B cell (primary cell): ENCODE measurements at regions of chr2 and their contacts with region 1.

Region 1: DNA sequence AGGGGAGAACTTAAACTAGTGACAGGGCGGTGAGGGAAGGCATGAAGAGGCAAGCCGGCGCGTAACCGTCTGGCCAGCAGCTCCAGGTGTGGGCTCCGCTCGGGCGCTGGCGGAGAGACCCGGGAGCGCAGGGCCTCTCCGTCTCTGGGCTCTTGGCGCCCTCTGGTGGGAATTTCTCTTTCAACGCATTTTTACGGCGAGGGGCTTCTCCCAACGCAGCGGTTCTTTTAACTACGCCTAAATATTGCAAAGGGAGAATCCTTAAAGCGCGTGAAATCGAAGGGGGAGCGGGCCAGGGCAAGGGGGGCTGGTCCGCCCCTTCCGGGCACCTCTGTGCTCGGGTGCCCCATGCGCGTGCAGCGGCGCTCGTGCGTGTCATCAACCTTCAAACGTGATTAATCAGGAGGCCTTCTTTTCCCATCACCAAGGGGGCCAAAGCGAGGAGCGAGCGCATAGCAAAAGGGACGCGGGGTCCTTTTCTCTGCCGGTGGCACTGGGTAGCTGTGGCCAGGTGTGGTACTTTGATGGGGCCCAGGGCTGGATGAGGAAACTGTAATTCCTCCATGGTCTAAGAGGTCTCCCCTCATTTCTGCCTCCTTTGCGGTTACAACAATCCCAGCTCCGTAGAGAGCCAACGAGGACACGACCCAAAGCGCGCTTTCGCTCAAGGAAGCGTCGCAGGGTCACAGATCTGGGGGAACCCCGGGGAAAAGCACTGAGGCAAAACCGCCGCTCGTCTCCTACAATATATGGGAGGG is 762 bp upstream of the GAD1 start:
- DNase-seq: peak; percentile 76
- ATAC-seq: peak; percentile 40
- H3K4me3 ChIP-seq: peak overlapping the region; percentile 21 to 49 (median 45)
- H3K4me3 Mint-ChIP-seq: peak overlapping the region; percentile 63
- H3K27ac ChIP-seq: no peak overlapping the region
- H3K27ac Mint-ChIP-seq: no peak overlapping the region
- H3K4me1 ChIP-seq: peaks cover 53 to 66% of the 10 kb centered on the region in 2 donors
- H3K4me1 Mint-ChIP-seq: peaks cover 50% of the 10 kb centered on the region
- H3K27me3 ChIP-seq: peaks cover 0 to 81% (median 65%) of the 10 kb centered on the region in 4 experiments
- H3K27me3 Mint-ChIP-seq: peaks cover 73% of the 10 kb centered on the region
- CTCF ChIP-seq: peak; percentile 67

Region 2: GRCh38 chr2:169933124-169933711 is 882.7 kb before region 1 on chr2:
- CTCF ChIA-PET with region 1: no interaction called
- POLR2A ChIA-PET with region 1: no interaction called
- intact Hi-C with region 1: loop called (anchors 5 kb)
- DNase-seq: peak; percentile 19
- ATAC-seq: peak; percentile 28
- H3K4me3 ChIP-seq: no peak overlapping the region
- H3K4me3 Mint-ChIP-seq: no peak overlapping the region
- H3K27ac ChIP-seq: no peak overlapping the region
- H3K27ac Mint-ChIP-seq: no peak overlapping the region
- H3K4me1 ChIP-seq: no peaks in the 10 kb centered on the region
- H3K4me1 Mint-ChIP-seq: no peaks in the 10 kb centered on the region
- H3K27me3 ChIP-seq: no peaks in the 10 kb centered on the region
- H3K27me3 Mint-ChIP-seq: no peaks in the 10 kb centered on the region
- CTCF ChIP-seq: peak; percentile 75

Region 3: DNA sequence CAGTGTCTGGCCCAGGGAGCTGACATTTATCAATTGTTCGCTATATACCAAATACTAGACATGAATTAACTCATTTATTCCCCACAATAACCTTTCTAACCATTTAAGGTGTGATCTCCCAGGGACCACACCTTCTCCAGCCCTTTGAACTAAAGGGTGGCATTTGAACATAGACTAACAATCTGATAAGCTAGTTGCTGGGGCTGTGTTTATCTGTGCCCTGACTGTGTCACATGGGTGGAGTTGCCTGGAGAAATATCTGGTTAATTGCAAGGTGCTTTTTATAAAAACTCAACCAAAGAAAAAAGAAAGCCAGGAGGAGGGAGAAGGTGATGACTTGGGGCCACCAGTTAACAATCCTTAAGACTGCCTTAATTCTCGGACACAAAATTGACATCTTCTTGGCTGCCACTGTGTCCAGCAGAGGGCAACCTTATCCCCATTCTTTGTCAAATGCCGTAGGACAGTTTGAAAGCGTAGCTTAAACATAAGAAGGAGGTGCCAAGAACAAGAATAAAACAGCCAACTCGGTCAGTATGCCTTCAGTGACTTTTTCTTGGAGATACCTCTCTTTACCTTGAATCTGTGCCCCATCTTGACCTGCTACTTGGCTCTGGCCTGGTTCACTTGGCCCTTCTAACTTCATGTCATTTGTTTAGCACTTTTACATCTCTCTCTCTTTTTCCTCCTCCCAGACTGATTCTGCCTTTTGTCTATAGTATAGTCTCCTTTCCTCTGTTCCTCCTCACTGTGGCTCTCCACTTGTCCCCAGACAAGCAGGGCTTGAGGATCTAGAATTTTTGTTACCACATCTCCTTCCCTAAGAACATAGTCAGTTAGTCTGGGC is 454.6 kb before region 1 on chr2:
- CTCF ChIA-PET with region 1: interaction called, 37 read pairs
- POLR2A ChIA-PET with region 1: no interaction called
- intact Hi-C with region 1: loop called (anchors 1 kb)
- DNase-seq: peak; percentile 54
- ATAC-seq: no peak
- H3K4me3 ChIP-seq: no peak overlapping the region
- H3K4me3 Mint-ChIP-seq: no peak overlapping the region
- H3K27ac ChIP-seq: no peak overlapping the region
- H3K27ac Mint-ChIP-seq: no peak overlapping the region
- H3K4me1 ChIP-seq: no peaks in the 10 kb centered on the region
- H3K4me1 Mint-ChIP-seq: peaks cover 2% of the 10 kb centered on the region
- H3K27me3 ChIP-seq: peaks cover 0 to 22% (median 7%) of the 10 kb centered on the region in 4 experiments
- H3K27me3 Mint-ChIP-seq: peaks cover 36% of the 10 kb centered on the region
- CTCF ChIP-seq: peak; percentile 72

Region 4: GRCh38 chr2:170675701-170676100 is 140.2 kb before region 1 on chr2:
- CTCF ChIA-PET with region 1: no interaction called
- POLR2A ChIA-PET with region 1: no interaction called
- intact Hi-C with region 1: no loop called
- DNase-seq: no peak
- ATAC-seq: no peak
- H3K4me3 ChIP-seq: no peak overlapping the region
- H3K4me3 Mint-ChIP-seq: no peak overlapping the region
- H3K27ac ChIP-seq: no peak overlapping the region
- H3K27ac Mint-ChIP-seq: no peak overlapping the region
- H3K4me1 ChIP-seq: no peaks in the 10 kb centered on the region
- H3K4me1 Mint-ChIP-seq: no peaks in the 10 kb centered on the region
- H3K27me3 ChIP-seq: no peaks in the 10 kb centered on the region
- H3K27me3 Mint-ChIP-seq: peaks cover 7% of the 10 kb centered on the region
- CTCF ChIP-seq: no peak

Region 5: GRCh38 chr2:170715062-170715931 is 100.6 kb before region 1 on chr2 and contains the start of gene SP5:
- CTCF ChIA-PET with region 1: no interaction called
- POLR2A ChIA-PET with region 1: no interaction called
- intact Hi-C with region 1: loop called (anchors 5 kb)
- DNase-seq: peak; percentile 33
- ATAC-seq: no peak
- H3K4me3 ChIP-seq: peak within 1 kb of the TSS in 4 of 5 experiments; percentile 41 to 65 (median 54)
- H3K4me3 Mint-ChIP-seq: peak within 1 kb of the TSS; percentile 84
- H3K27ac ChIP-seq: no peak within 1 kb of the TSS
- H3K27ac Mint-ChIP-seq: no peak within 1 kb of the TSS
- H3K4me1 ChIP-seq: peaks cover 21 to 25% of the 10 kb centered on the region in 2 donors
- H3K4me1 Mint-ChIP-seq: peaks cover 21% of the 10 kb centered on the region
- H3K27me3 ChIP-seq: peaks cover 0 to 71% (median 36%) of the 10 kb centered on the region in 4 experiments
- H3K27me3 Mint-ChIP-seq: peaks cover 56% of the 10 kb centered on the region
- CTCF ChIP-seq: no peak
- total RNA-seq, gene SP5: not detected in 2 replicates

Region 6: GRCh38 chr2:170783551-170783950 is 32.4 kb before region 1 on chr2:
- CTCF ChIA-PET with region 1: no interaction called
- POLR2A ChIA-PET with region 1: no interaction called
- intact Hi-C with region 1: no loop called
- DNase-seq: no peak
- ATAC-seq: no peak
- H3K4me3 ChIP-seq: no peak overlapping the region
- H3K4me3 Mint-ChIP-seq: no peak overlapping the region
- H3K27ac ChIP-seq: no peak overlapping the region
- H3K27ac Mint-ChIP-seq: no peak overlapping the region
- H3K4me1 ChIP-seq: no peaks in the 10 kb centered on the region
- H3K4me1 Mint-ChIP-seq: no peaks in the 10 kb centered on the region
- H3K27me3 ChIP-seq: peaks cover 0 to 12% (median 8%) of the 10 kb centered on the region in 4 experiments
- H3K27me3 Mint-ChIP-seq: peaks cover 37% of the 10 kb centered on the region
- CTCF ChIP-seq: no peak

Region 7: GRCh38 chr2:172095146-172095904 is 1279.4 kb after region 1 on chr2:
- CTCF ChIA-PET with region 1: no interaction called
- POLR2A ChIA-PET with region 1: no interaction called
- intact Hi-C with region 1: loop called (anchors 5 kb)
- DNase-seq: peak; percentile 75
- ATAC-seq: peak; percentile 55
- H3K4me3 ChIP-seq: peak overlapping the region in 4 of 5 experiments; percentile 9 to 50 (median 28)
- H3K4me3 Mint-ChIP-seq: peak overlapping the region; percentile 90
- H3K27ac ChIP-seq: no peak overlapping the region
- H3K27ac Mint-ChIP-seq: peak overlapping the region; percentile 81
- H3K4me1 ChIP-seq: peaks cover 54 to 75% of the 10 kb centered on the region in 2 donors
- H3K4me1 Mint-ChIP-seq: peaks cover 30% of the 10 kb centered on the region
- H3K27me3 ChIP-seq: peaks cover 7 to 96% (median 84%) of the 10 kb centered on the region in 4 experiments
- H3K27me3 Mint-ChIP-seq: peaks cover 64% of the 10 kb centered on the region
- CTCF ChIP-seq: no peak